A549 (cell line): ENCODE measurements at regions of chr17 and their contacts with region 1.

Region 1: GRCh38 chr17:43517615-43518386 is 28.3 kb downstream of the ETV4 start:
- DNase-seq: no peak
- ATAC-seq: no peak
- H3K4me3 ChIP-seq: no peak overlapping the region
- H3K27ac ChIP-seq: no peak overlapping the region
- H3K4me1 ChIP-seq: no peaks in the 10 kb centered on the region
- CTCF ChIP-seq: no peak
- EP300 ChIP-seq: no peak
- POLR2A ChIP-seq: no peak
- RAD21 ChIP-seq: no peak

Region 2: DNA sequence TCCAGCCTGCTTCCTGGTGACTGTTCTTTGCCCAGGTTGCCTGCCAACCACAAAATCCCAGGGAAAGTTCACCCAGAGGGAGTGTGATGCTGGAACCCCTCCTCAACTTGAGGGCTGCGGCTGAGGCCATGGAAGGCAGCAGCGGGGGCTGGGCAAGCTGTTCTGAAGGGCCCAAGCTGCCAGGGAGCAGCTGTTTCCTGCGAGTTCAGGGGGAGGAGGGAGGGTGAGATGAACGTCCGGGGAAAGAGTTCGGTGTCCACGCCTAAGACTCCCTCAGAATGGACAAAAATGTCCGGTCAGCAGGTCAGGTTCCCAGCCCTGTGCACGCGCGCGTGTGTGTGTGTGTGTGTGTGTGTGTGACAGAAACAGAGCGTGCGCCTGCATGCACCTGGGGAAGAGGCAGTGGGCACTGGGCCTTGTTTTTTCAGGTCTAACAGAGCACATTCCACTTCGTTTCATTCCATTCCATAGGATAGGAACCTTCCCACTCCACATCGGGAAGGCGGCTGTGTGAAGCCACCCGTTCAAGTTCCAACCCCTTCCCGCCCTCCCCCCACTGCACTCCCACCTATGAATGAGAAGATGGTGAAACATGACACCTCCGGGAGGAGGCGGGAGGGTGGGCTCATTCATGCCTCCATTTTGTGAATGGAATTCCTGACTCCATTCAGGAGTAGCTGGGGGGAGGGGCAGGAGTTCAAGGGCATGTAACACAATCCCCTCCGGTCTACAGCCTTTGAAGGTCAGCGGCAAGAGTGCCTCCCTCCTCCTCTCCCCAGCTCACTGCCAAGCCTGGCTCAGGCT is 12.7 kb after region 1 on chr17:
- CTCF ChIA-PET with region 1: interaction called, 50 read pairs
- POLR2A ChIA-PET with region 1: no interaction called
- DNase-seq: no peak
- ATAC-seq: peak in 1 of 2 experiments; percentile 7; a peak in 2 of 6 replicates
- H3K4me3 ChIP-seq: no peak overlapping the region
- H3K27ac ChIP-seq: peak overlapping the region in 1 of 2 experiments; percentile 48; a peak in 2 of 6 replicates
- H3K4me1 ChIP-seq: peaks cover 31% of the 10 kb centered on the region
- CTCF ChIP-seq: no peak
- EP300 ChIP-seq: no peak
- POLR2A ChIP-seq: no peak
- RAD21 ChIP-seq: no peak

Region 3: GRCh38 chr17:43556292-43556691 is 38.5 kb after region 1 on chr17:
- CTCF ChIA-PET with region 1: interaction called, 12 read pairs
- POLR2A ChIA-PET with region 1: no interaction called
- DNase-seq: peak; percentile 95 to 96
- ATAC-seq: peak; percentile 67 to 91
- H3K4me3 ChIP-seq: no peak overlapping the region
- H3K27ac ChIP-seq: peak overlapping the region; percentile 64 to 85
- H3K4me1 ChIP-seq: peaks cover 56% of the 10 kb centered on the region
- CTCF ChIP-seq: no peak
- EP300 ChIP-seq: no peak
- POLR2A ChIP-seq: no peak
- RAD21 ChIP-seq: no peak

Region 4: GRCh38 chr17:43570518-43570928 is 52.7 kb after region 1 on chr17:
- CTCF ChIA-PET with region 1: interaction called, 57 read pairs
- POLR2A ChIA-PET with region 1: no interaction called
- DNase-seq: peak in 1 of 2 experiments; percentile 43
- ATAC-seq: peak in 1 of 2 experiments; percentile 35; a peak in 3 of 6 replicates
- H3K4me3 ChIP-seq: no peak overlapping the region
- H3K27ac ChIP-seq: no peak overlapping the region
- H3K4me1 ChIP-seq: peaks cover 24% of the 10 kb centered on the region
- CTCF ChIP-seq: no peak
- EP300 ChIP-seq: no peak
- POLR2A ChIP-seq: no peak
- RAD21 ChIP-seq: no peak

Region 5: DNA sequence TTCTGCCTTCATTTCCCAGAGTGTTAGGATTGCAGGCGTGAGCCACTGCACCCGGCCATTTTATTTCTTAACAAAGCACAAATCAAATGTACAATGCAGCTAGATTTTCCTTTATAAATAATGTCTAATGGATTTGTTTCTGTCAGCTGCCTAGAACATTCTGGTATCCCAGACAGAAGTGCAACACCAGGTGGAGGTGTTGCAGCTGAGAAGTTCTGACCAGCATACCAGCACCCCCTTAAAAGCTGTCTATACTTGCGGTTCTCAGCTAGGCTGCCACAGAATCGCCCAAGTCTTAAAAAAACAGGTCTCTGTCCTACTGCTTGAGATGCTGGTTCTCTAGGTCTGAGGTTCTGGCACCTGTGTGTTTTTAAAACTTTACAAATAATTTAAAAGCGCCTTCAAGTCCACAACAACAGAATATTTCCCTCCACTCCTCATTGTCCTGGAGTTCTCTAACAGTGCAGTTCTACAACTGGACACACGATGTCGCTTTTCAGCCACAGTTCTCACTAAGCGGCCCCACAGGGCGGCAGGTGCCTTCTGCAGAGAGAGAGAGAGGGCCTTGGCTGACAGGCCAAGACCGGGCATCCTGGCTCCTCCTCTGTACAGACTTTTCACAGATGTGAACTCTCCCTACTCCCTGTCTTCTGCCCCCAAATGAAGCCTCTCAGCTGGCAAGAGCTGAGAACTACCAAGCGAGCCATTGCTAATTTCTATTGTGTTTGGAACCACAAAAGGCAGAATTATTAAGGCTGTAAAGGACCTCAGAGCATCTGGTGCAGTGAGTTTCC is 176.5 kb after region 1 on chr17:
- CTCF ChIA-PET with region 1: interaction called, 24 read pairs
- POLR2A ChIA-PET with region 1: no interaction called
- DNase-seq: peak; percentile 80 to 90
- ATAC-seq: peak; percentile 83 to 94
- H3K4me3 ChIP-seq: no peak overlapping the region
- H3K27ac ChIP-seq: 0 out of 6 replicates have a peak overlapping the region, but pooled peaks of 1 of the 2 experiments have one; percentile 33
- H3K4me1 ChIP-seq: peaks cover 14% of the 10 kb centered on the region
- CTCF ChIP-seq: peak; percentile 100
- EP300 ChIP-seq: no peak
- POLR2A ChIP-seq: no peak
- RAD21 ChIP-seq: peak; percentile 100

Region 6: DNA sequence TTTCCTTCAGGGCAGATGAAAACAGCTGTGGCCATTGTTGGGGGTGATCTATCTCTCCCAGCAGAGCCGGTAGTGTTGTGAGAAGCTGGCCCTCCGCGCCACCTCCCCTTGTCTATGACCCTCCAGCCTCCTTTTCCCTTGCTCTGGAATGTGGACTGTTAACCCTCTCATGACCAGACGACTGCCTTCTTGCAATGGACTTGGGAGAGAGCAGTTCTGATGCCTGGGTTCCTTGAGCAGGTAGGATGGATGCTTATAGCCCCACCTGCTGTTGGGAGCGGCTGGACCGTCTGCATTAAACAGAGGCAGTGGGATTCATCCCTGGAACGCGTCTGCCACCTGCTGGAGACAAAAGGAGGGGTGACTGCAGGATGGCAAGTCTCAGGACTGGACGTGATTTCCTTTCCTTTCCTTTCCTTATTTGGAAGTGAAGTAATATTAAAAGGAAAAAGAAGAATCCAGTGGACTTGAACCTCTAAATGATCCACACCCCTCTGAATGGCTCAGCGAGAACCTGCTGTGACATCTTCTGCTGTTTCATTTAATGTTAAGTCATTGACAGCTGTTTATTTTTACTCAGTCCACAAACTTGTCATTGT is 242.6 kb after region 1 on chr17:
- CTCF ChIA-PET with region 1: interaction called, 11 read pairs
- POLR2A ChIA-PET with region 1: no interaction called
- DNase-seq: peak; percentile 96 to 98
- ATAC-seq: peak; percentile 86 to 92
- H3K4me3 ChIP-seq: no peak overlapping the region
- H3K27ac ChIP-seq: peak overlapping the region in 1 of 2 experiments; percentile 29; a peak in 1 of 6 replicates
- H3K4me1 ChIP-seq: peaks cover 12% of the 10 kb centered on the region
- CTCF ChIP-seq: peak; percentile 100
- EP300 ChIP-seq: no peak
- POLR2A ChIP-seq: no peak
- RAD21 ChIP-seq: peak; percentile 100